Caco-2 (cell line): ENCODE measurements at regions of chr16 and their contacts with region 1.

Region 1: DNA sequence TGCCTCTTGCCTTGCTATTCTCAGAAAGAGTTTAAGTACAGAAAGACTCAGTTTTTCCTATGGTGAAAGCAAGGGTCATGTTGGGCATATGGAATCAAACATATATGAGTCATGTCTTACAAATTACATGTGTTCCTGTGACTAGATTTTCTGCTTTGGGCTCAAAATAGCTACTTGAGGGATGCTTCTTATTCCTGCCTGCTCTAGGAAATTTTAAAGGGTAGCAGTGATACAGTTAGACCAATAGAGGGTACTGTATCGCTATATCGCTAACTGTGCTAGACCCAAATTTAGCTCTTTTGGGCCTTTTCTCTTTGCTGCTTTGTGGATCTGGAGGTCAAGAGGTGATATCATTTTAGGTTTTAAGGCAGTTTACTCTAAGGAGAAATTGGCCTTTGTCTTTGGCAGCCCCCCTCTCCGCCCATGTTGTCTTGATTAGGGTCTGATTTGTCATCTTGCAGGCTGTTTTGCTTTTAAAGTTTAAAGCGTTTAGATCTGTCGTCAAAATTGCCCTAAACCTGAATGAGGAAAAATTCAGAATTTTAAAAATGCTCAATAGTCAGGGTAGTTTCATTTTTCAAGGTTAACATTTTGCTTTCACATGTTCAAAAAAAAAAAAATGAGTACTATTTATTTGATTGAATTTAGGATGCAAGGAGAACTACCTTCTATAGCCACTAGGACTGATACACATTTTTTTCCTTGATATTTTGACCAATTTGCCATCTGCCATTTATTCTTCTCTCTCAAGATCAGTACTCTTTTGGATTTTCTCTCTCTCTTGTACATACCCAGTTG is 8.8 kb downstream of the NFATC3 start:
- DNase-seq: peak in 1 of 2 experiments; percentile 31
- H3K4me3 ChIP-seq: no peak overlapping the region
- H3K4me3 Mint-ChIP-seq: no peak overlapping the region
- H3K27ac Mint-ChIP-seq: no peak overlapping the region
- H3K4me1 ChIP-seq: peaks cover 34% of the 10 kb centered on the region
- H3K4me1 Mint-ChIP-seq: peaks cover 49% of the 10 kb centered on the region
- H3K27me3 ChIP-seq: no peaks in the 10 kb centered on the region; the same call in 1 of the 2 replicates
- H3K27me3 Mint-ChIP-seq: peaks cover 3% of the 10 kb centered on the region
- CTCF ChIP-seq: peak; percentile 41 to 50

Region 2: GRCh38 chr16:67822511-67822910 is 271.5 kb before region 1 on chr16:
- CTCF ChIA-PET with region 1: no interaction called
- POLR2A ChIA-PET with region 1: no interaction called
- intact Hi-C with region 1: no loop called
- DNase-seq: no peak
- H3K4me3 ChIP-seq: no peak overlapping the region
- H3K4me3 Mint-ChIP-seq: no peak overlapping the region
- H3K27ac Mint-ChIP-seq: no peak overlapping the region
- H3K4me1 ChIP-seq: no peaks in the 10 kb centered on the region
- H3K4me1 Mint-ChIP-seq: no peaks in the 10 kb centered on the region
- H3K27me3 ChIP-seq: no peaks in the 10 kb centered on the region
- H3K27me3 Mint-ChIP-seq: no peaks in the 10 kb centered on the region
- CTCF ChIP-seq: no peak

Region 3: GRCh38 chr16:68116256-68116867 is 22.3 kb after region 1 on chr16:
- CTCF ChIA-PET with region 1: interaction called, 6 read pairs
- POLR2A ChIA-PET with region 1: interaction called, 17 read pairs
- intact Hi-C with region 1: loop called (anchors 1 kb)
- DNase-seq: peak in 1 of 2 experiments; percentile 29
- H3K4me3 ChIP-seq: no peak overlapping the region
- H3K4me3 Mint-ChIP-seq: no peak overlapping the region
- H3K27ac Mint-ChIP-seq: no peak overlapping the region
- H3K4me1 ChIP-seq: peaks cover 9% of the 10 kb centered on the region; the same call in 1 of the 2 replicates
- H3K4me1 Mint-ChIP-seq: peaks cover 11% of the 10 kb centered on the region
- H3K27me3 ChIP-seq: no peaks in the 10 kb centered on the region
- H3K27me3 Mint-ChIP-seq: no peaks in the 10 kb centered on the region
- CTCF ChIP-seq: peak; percentile 68 to 82